A673 (cell line): ENCODE measurements at regions of chr13 and their contacts with region 1.

Region 1: GRCh38 chr13:105442941-105443340 is 1092.5 kb downstream of the EFNB2 start:
- DNase-seq: peak; percentile 58
- H3K4me3 ChIP-seq: no peak overlapping the region
- H3K27ac ChIP-seq: no peak overlapping the region
- H3K4me1 ChIP-seq: no peaks in the 10 kb centered on the region
- H3K27me3 ChIP-seq: no peaks in the 10 kb centered on the region
- CTCF ChIP-seq: no peak

Region 2: DNA sequence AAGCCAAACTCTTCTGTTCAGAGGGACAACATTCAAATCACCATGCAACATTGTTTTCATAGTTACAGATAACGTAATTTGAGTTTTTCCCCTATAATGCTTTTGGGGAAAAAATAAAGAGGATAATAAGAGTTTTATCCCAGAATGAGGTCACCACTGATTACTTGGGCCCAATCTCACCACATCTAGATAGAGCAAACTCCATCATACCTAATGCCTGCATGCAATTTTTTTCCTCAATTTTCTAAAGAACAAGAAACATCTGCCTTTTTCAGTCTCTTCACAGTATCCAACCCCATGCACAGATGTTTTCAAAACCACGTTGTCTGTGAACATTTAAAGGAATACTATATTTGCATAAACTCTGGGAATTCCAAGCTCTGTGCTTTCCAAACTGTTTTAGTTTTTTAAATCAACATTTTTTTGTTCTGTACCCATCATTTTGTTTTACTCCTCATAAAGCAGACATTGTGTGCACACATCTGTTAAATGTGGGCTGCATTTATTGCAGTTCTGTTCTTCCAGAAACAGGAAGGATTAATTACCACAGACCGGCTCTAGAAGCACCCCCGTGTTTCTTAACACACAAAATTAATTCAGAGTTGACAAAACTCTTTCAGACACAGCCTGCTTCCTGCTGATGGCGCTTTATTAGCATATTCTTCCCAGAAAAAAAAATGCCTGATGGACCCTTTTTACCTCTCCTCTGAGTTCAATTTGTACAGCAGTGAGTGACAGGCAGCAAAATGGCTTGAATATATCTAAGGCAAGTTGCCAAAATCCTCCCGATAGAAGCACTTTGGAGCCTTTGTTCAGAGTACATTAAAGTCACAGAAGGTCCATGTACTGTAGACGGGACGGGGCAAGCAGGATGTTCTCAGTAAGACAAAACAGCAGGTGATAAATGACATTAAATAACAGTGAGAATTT is 79.4 kb before region 1 on chr13:
- CTCF ChIA-PET with region 1: no interaction called
- POLR2A ChIA-PET with region 1: no interaction called
- intact Hi-C with region 1: loop called (anchors 5 kb)
- DNase-seq: peak; percentile 96
- H3K4me3 ChIP-seq: no peak overlapping the region
- H3K27ac ChIP-seq: no peak overlapping the region
- H3K4me1 ChIP-seq: peaks cover 25% of the 10 kb centered on the region
- H3K27me3 ChIP-seq: no peaks in the 10 kb centered on the region
- CTCF ChIP-seq: no peak

Region 3: DNA sequence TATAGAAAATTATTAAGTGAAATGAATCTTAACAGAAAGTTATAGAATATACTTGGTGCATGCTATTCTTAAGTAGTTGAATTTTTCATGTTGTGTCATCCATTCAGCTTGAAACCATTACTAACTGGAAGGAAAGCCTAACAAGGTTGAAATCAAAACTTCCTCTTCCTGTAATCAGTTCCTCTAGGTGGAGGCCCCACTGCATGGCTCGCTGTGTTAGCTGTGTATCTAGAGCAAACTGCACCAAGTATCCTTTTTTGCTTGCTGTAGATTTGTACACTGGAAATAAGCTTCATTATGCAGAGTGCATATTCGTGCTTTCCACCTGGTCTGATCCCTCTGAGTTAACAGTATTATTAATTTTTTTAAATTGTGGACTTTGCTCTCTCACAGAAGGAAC is 53.6 kb before region 1 on chr13:
- CTCF ChIA-PET with region 1: no interaction called
- POLR2A ChIA-PET with region 1: no interaction called
- intact Hi-C with region 1: no loop called
- DNase-seq: no peak
- H3K4me3 ChIP-seq: no peak overlapping the region
- H3K27ac ChIP-seq: no peak overlapping the region
- H3K4me1 ChIP-seq: no peaks in the 10 kb centered on the region
- H3K27me3 ChIP-seq: no peaks in the 10 kb centered on the region
- CTCF ChIP-seq: no peak

Region 4: GRCh38 chr13:105611424-105611823 is 168.5 kb after region 1 on chr13:
- CTCF ChIA-PET with region 1: no interaction called
- POLR2A ChIA-PET with region 1: no interaction called
- intact Hi-C with region 1: no loop called
- DNase-seq: no peak
- H3K4me3 ChIP-seq: no peak overlapping the region
- H3K27ac ChIP-seq: no peak overlapping the region
- H3K4me1 ChIP-seq: no peaks in the 10 kb centered on the region
- H3K27me3 ChIP-seq: no peaks in the 10 kb centered on the region
- CTCF ChIP-seq: no peak